ENCODE measurements at regions of chr2 and their contacts with region 1.

Region 1: GRCh38 chr2:182650704-182651103 is 65.4 kb upstream of the DNAJC10 start:
- DNase-seq: peak; percentile 28
- ATAC-seq: no peak
- H3K4me3 ChIP-seq: no peak overlapping the region
- H3K27ac ChIP-seq: no peak overlapping the region
- H3K4me1 ChIP-seq: no peaks in the 10 kb centered on the region
- H3K27me3 ChIP-seq: no peaks in the 10 kb centered on the region; a peak in 1 of 5 replicates
- CTCF ChIP-seq: peak; percentile 54
- EP300 ChIP-seq: no peak
- POLR2A ChIP-seq: no peak
- RAD21 ChIP-seq: peak; percentile 32; the same call in 1 of the 2 replicates

Region 2: GRCh38 chr2:182240862-182241371 is 409.8 kb before region 1 on chr2:
- CTCF ChIA-PET with region 1: interaction called, 31 read pairs
- POLR2A ChIA-PET with region 1: no interaction called
- in situ Hi-C with region 1: loop called (anchors 5 kb)
- intact Hi-C with region 1: loop called (anchors 1 kb)
- DNase-seq: peak; percentile 55
- ATAC-seq: peak; percentile 99
- H3K4me3 ChIP-seq: peak overlapping the region in 2 of 3 experiments; percentile 4 to 6; a peak in 2 of 6 replicates
- H3K27ac ChIP-seq: no peak overlapping the region
- H3K4me1 ChIP-seq: peaks cover 7% of the 10 kb centered on the region
- H3K27me3 ChIP-seq: no peaks in the 10 kb centered on the region
- CTCF ChIP-seq: peak; percentile 70
- EP300 ChIP-seq: no peak
- POLR2A ChIP-seq: no peak
- RAD21 ChIP-seq: peak; percentile 38

Region 3: GRCh38 chr2:182694189-182694588 is 43.5 kb after region 1 on chr2:
- CTCF ChIA-PET with region 1: no interaction called
- POLR2A ChIA-PET with region 1: no interaction called
- in situ Hi-C with region 1: no loop called
- intact Hi-C with region 1: no loop called
- DNase-seq: no peak
- ATAC-seq: no peak
- H3K4me3 ChIP-seq: no peak overlapping the region
- H3K27ac ChIP-seq: no peak overlapping the region
- H3K4me1 ChIP-seq: no peaks in the 10 kb centered on the region
- H3K27me3 ChIP-seq: no peaks in the 10 kb centered on the region
- CTCF ChIP-seq: no peak
- EP300 ChIP-seq: no peak
- POLR2A ChIP-seq: no peak
- RAD21 ChIP-seq: no peak

Measured in HepG2 (cell line).